Activated CD4-positive, alpha-beta T cell treated with anti-CD3 and anti-CD28 coated beads, Interleukin-2, amount 10 ng/mL, durations not matched to agents 24 days and 14 days (primary cell): ENCODE measurements at regions of chr19 and their contacts with region 1.

Region 1: DNA sequence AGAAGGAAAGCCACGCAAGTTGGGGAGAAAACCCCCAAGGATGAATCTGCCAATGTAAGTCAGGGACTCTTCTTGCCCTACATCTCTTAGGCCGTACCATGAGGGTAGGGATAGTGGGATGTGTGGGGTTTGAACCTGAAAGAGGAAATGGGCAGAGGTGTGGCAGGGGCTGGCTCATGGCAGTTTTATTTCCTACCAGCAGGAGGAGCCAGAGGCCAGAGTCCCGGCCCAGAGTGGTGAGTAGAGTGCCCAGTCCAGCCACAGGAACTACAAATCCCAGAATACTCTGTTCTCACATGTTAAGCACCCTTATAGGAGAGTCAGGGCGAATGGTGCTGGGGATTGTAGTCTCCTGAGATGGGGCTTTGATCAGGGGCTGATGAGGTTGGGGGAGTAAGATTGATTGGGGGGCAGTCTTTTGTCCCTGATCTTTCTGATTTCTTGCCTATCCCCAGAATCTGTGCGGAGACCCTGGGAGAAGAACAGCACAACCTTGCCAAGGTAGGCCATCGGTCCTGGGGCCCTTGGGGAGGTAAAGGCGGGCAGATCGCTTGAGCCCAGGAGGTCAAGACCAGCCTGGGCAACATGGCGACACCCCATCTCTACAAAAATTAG is 16.5 kb downstream of the VASP start:
- DNase-seq: peak; percentile 92
- H3K4me3 Mint-ChIP-seq: no peak overlapping the region
- H3K27ac Mint-ChIP-seq: peak overlapping the region; percentile 53
- H3K4me1 Mint-ChIP-seq: peaks cover 18% of the 10 kb centered on the region
- H3K27me3 Mint-ChIP-seq: no peaks in the 10 kb centered on the region

Region 2: GRCh38 chr19:45391340-45391739 is 132.4 kb before region 1 on chr19:
- intact Hi-C with region 1: no loop called
- DNase-seq: no peak
- H3K4me3 Mint-ChIP-seq: no peak overlapping the region
- H3K27ac Mint-ChIP-seq: no peak overlapping the region
- H3K4me1 Mint-ChIP-seq: peaks cover 1% of the 10 kb centered on the region
- H3K27me3 Mint-ChIP-seq: peaks cover 16% of the 10 kb centered on the region

Region 3: DNA sequence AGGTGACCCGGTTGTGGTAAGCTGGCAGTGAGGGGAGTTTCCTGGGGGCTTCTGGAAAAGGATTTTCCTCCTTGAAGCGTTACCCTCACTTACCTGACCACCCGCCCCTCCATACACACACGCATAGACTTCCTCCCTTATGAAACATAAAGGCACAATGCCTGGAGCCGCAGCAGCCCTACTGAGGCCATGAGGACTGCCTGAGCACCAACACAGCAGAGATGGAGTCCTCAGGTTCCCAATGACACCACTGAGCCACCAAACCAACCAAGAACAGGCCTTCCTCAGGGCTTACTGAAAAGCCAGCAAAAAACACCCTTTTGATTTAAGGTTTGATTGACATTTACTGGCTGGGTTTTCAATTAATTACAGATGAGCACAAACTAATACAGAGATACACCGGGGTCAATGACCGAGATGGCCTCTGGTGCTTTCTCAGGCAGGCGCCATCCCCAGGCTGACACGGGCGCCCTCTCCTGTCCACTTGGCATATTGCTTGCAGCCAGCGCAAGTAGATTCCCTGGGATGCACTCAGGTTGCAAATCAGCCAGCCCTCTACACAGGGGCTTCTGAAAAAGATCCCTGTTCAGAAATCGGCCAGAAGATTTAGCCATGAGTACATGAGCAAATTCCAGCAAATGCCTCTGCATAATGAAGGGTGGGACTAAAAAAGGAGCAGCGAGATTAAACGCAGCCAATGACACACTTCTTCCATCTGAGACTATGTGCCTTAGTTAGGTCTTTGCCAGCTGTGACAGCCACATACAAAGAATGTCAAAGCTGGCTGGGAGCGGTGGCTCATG is 46.1 kb after region 1 on chr19:
- intact Hi-C with region 1: loop called (anchors 1 kb)
- DNase-seq: peak; percentile 89
- H3K4me3 Mint-ChIP-seq: no peak overlapping the region
- H3K27ac Mint-ChIP-seq: no peak overlapping the region
- H3K4me1 Mint-ChIP-seq: peaks cover 7% of the 10 kb centered on the region
- H3K27me3 Mint-ChIP-seq: no peaks in the 10 kb centered on the region